Heart left ventricle (tissue), 16 donors: ENCODE measurements at regions of chr2 and their contacts with region 1.

Region 1: DNA sequence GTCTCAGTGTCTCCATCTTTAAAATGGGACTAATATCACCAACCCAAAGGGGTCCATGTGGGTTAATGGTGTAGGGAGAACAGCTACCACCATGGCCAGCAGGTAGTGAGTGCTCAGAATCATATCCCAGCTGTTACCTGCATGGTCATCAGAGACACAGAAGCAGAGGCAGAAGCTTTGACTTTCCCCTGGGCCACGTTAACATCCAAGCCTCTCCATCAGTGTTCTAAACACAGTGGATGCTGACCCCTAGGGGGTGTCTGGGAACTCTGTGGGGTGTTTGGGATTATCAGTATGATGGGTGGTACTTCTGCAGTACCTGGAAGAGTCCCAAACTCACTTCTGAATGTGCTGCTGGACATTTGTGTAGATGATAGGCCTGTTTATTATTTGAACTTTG is 93.6 kb downstream of the GYPC start:
- DNase-seq: no peak
- ATAC-seq: peak; percentile 61 to 76 (median 69)
- H3K4me3 ChIP-seq: no peak overlapping the region
- H3K27ac ChIP-seq: no peak overlapping the region
- H3K4me1 ChIP-seq: peaks cover 0 to 3% (median 0%) of the 10 kb centered on the region in 12 donors
- H3K27me3 ChIP-seq: no peaks in the 10 kb centered on the region
- CTCF ChIP-seq: peak in 9 of 12 donors; percentile 8 to 48 (median 37)
- POLR2A ChIP-seq: no peak

Region 2: DNA sequence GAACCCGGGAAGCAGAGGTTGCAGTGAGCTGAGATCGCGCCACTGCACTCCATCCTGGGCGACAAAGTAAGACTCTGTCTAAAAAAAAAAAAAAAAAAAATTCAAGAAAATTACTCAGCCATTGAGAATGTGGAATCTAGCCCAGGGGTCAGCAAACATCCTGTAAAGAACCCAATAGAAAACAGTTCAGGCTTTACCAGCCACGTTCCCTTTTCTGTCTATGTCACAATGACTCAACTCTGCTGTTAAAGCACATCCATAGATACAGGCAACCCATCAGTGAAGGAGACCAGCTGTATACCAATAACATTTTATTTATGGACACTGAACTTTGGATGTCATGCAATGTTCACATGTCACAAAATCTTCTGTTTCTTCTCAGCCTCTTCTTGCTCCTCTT is 529.2 kb before region 1 on chr2:
- intact Hi-C with region 1: no loop called
- DNase-seq: no peak
- ATAC-seq: no peak
- H3K4me3 ChIP-seq: no peak overlapping the region
- H3K27ac ChIP-seq: no peak overlapping the region
- H3K4me1 ChIP-seq: no peaks in the 10 kb centered on the region
- H3K27me3 ChIP-seq: peaks cover 0 to 5% (median 0%) of the 10 kb centered on the region in 9 donors
- CTCF ChIP-seq: no peak
- POLR2A ChIP-seq: no peak

Region 3: GRCh38 chr2:126627643-126628042 is 121.9 kb before region 1 on chr2:
- intact Hi-C with region 1: loop called in 1 of 10 experiments (anchors 10 kb)
- DNase-seq: no peak
- ATAC-seq: peak in 3 of 4 donors; percentile 34 to 86 (median 80)
- H3K4me3 ChIP-seq: no peak overlapping the region
- H3K27ac ChIP-seq: no peak overlapping the region
- H3K4me1 ChIP-seq: peaks cover 0 to 12% (median 2%) of the 10 kb centered on the region in 12 donors
- H3K27me3 ChIP-seq: no peaks in the 10 kb centered on the region
- CTCF ChIP-seq: no peak
- POLR2A ChIP-seq: no peak

Region 4: DNA sequence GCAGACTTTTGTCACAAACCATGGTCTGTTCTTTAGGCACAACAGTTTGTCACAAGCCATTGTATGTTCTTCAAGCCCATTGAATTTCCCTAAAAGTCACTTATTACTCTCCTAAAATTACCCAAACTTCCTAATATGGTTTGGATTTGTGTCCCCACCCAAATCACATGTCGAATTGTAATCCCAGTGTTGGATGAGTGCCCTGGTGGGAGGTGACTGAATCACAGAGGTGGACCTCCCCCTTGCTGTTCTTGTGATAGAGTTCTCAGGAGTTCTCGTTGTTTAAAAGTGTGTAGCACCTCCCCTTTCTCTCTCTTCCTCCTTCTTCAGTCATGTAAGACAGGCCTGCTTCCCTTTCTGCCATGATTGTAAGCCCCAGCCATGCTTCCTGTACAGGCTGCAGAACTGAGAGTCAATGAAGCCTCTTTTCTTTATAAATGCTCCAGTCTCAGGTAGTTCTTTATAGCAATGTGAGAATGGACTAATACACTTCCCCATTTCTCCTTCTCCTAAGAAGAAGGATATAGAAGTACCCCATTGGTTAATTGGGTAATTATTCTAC is 104.8 kb before region 1 on chr2:
- intact Hi-C with region 1: loop called in 2 of 10 experiments (anchors 5 to 10 kb)
- DNase-seq: peak in 1 of 5 donors; percentile 22
- ATAC-seq: peak in 2 of 4 donors; percentile 9 to 37
- H3K4me3 ChIP-seq: no peak overlapping the region
- H3K27ac ChIP-seq: no peak overlapping the region
- H3K4me1 ChIP-seq: no peaks in the 10 kb centered on the region
- H3K27me3 ChIP-seq: no peaks in the 10 kb centered on the region
- CTCF ChIP-seq: no peak
- POLR2A ChIP-seq: no peak

Region 5: DNA sequence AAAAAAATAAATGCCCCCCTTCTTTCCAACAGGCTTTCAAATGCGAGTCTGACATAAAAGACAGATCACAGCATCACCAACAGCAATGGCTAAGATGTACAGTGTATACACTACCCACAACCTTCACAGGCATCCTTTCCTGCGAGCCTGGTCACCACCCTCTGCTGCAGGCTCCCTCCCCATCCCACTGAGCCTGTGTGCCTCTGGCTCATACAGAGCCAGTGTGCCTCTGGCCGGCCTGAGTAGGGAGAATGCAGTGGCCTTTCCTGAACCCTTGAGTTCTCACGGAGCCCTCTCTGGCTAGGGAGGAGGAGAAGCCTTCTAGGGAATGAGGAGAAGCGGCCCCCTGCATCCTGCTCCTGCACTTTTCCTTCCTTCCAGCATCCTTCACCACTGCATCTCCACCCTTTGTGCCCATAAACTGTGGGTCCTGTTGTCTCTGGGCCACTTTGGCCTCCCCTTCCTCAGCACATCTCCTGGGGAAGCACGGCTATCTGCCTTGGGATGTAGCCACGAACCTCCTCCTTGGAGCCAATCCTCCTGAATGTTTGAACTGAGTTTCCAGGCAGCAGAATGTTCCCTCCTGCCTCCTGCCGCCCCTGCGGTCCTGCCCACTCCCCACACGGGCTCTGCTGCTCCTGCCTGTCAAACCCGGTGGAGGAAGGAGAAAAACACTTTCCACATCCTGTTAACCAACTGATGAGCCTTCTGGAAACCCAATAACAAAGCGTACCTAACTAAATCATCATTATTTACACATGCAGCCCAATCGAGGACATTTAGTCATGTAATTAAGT is 71.1 kb before region 1 on chr2:
- intact Hi-C with region 1: no loop called
- DNase-seq: no peak
- ATAC-seq: peak in 3 of 4 donors; percentile 38 to 58 (median 41)
- H3K4me3 ChIP-seq: no peak overlapping the region
- H3K27ac ChIP-seq: peak overlapping the region in 2 of 12 donors; percentile 22 to 33
- H3K4me1 ChIP-seq: peaks cover 0 to 30% (median 12%) of the 10 kb centered on the region in 12 donors
- H3K27me3 ChIP-seq: no peaks in the 10 kb centered on the region
- CTCF ChIP-seq: no peak
- POLR2A ChIP-seq: no peak

Region 6: GRCh38 chr2:127080226-127080937 is 330.8 kb after region 1 on chr2:
- intact Hi-C with region 1: no loop called
- DNase-seq: peak in 1 of 5 donors; percentile 65
- ATAC-seq: peak; percentile 38 to 73 (median 56)
- H3K4me3 ChIP-seq: peak overlapping the region in 1 of 12 donors; percentile 52
- H3K27ac ChIP-seq: peak overlapping the region in 1 of 12 donors; percentile 78
- H3K4me1 ChIP-seq: peaks cover 0 to 57% (median 21%) of the 10 kb centered on the region in 12 donors
- H3K27me3 ChIP-seq: no peaks in the 10 kb centered on the region
- CTCF ChIP-seq: no peak
- POLR2A ChIP-seq: no peak